ENCODE measurements at regions of chr6 and their contacts with region 1.

Region 1: DNA sequence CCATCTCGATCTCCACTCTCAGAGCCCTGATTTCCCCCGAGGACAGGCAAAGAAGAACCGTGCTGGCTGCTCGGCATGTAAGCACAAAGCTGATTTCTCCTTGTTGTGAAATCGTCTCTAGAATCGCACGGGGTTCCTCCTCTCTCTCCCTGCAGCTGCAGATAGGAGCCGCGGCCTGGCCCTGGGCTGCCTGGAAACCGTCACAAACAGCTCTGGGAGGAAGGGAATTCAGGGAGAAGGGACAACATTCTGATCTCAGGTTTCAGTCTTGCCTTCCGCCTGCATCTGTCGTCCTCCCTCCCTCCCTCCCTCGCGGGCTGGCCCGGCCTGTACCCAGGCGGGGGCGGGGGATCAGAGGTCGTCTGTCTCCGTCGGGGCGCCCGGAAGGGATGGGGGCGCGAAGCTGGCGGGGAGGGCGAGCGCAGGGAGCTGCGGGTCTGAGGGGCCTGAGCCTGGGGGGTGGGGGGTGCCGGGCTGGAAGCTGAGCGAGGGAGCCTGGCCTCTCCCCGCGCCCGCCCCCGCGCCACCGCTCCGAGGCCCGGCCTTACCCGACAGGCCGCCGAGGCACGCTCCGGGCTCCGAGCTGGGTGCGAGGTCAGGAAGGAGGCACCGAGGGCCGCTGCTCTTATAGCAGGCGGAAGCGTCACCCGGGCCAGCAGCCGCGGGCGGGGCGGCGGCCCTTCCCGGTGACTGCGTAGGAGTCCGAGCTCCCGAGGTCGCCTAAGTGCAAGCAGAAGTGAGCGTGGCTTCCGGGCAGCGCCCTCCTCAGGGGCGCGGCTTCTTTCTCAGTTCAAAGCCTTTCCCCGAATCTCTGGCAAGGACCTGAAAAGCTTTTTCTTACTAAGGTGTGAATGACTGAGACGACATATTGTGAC is at the start of gene SERPINB1:
- DNase-seq: peak; percentile 92 to 98 (median 94)
- ATAC-seq: peak; percentile 93
- H3K4me3 ChIP-seq: peak within 1 kb of the TSS; percentile 52
- H3K27ac ChIP-seq: peak within 1 kb of the TSS; percentile 84
- H3K4me1 ChIP-seq: peaks cover 27 to 32% of the 10 kb centered on the region in 2 experiments
- H3K27me3 ChIP-seq: no peaks in the 10 kb centered on the region
- CTCF ChIP-seq: peak; percentile 30 to 39 (median 33); a peak in 5 of 6 replicates
- EP300 ChIP-seq: peak; percentile 81
- POLR2A ChIP-seq: peak; percentile 91
- RAD21 ChIP-seq: peak; percentile 15 to 19; a peak in 1 of 4 replicates
- polyA plus RNA-seq, gene SERPINB1: 63.8 to 68.7 TPM

Region 2: GRCh38 chr6:2658788-2659187 is 182.7 kb before region 1 on chr6:
- CTCF ChIA-PET with region 1: no interaction called
- POLR2A ChIA-PET with region 1: no interaction called
- in situ Hi-C with region 1: no loop called
- intact Hi-C with region 1: no loop called
- DNase-seq: no peak
- ATAC-seq: no peak; the same call in 1 of the 3 replicates
- H3K4me3 ChIP-seq: no peak overlapping the region
- H3K27ac ChIP-seq: no peak overlapping the region
- H3K4me1 ChIP-seq: no peaks in the 10 kb centered on the region
- H3K27me3 ChIP-seq: peaks cover 13 to 23% of the 10 kb centered on the region in 2 experiments; a peak in 4 of 5 replicates
- CTCF ChIP-seq: no peak
- EP300 ChIP-seq: no peak
- POLR2A ChIP-seq: no peak
- RAD21 ChIP-seq: no peak

Region 3: DNA sequence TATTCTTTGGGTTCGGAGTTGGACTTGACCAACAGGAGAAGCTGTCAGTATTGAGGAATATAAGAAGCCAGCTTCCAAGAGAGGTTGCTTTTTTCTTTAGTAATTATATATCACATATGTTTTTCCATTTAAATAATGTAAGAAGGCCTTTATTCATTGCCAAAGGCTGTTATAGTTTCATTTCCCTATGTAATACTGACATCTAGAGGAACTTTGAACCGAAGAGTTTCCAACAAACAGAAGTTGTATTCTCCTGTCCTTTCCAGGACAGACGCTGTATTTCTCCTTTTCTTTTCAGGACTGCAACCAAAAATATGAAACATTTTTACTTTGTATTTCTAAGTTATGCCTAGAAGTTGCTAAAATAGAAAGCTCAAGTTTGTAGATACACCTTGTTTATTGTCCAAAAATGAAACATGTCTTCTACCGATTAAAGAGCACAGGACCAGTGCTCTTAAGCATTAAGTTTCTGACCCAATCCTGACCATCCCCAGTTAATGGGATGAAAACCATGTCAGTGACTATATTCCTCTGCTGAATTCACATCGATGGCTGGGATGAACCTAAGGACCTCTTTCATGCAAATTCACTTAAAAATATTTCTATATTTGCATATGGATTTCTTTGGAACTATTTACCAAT is 145.9 kb before region 1 on chr6:
- CTCF ChIA-PET with region 1: no interaction called
- POLR2A ChIA-PET with region 1: no interaction called
- in situ Hi-C with region 1: no loop called
- intact Hi-C with region 1: no loop called
- DNase-seq: peak in 1 of 4 experiments; percentile 30
- ATAC-seq: peak; percentile 72; the same call in 2 of the 3 replicates
- H3K4me3 ChIP-seq: no peak overlapping the region
- H3K27ac ChIP-seq: no peak overlapping the region
- H3K4me1 ChIP-seq: no peaks in the 10 kb centered on the region
- H3K27me3 ChIP-seq: peaks cover 51 to 59% of the 10 kb centered on the region in 2 experiments
- CTCF ChIP-seq: peak; percentile 17 to 62 (median 48); a peak in 4 of 6 replicates
- EP300 ChIP-seq: no peak
- POLR2A ChIP-seq: no peak
- RAD21 ChIP-seq: peak; percentile 83 to 84

Region 4: DNA sequence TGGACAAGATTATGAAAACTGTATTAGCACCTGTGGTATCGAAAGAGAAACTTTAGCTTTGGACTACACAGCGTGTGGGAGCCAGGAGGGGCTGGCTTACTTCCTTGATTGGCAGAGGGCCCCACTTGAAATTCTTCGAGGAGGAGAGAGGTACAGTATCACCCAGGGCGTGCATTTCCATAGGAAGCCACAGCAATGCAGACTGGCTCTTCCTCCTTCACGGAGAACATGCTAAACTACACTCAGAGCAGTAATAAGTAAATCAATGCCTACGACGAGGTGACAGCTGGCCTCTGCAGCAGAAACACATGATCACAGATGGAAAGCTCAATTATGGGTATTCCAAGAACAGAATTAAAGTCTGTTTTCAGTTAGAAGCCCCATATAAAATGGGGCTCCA is 134.9 kb before region 1 on chr6:
- CTCF ChIA-PET with region 1: no interaction called
- POLR2A ChIA-PET with region 1: no interaction called
- in situ Hi-C with region 1: no loop called
- intact Hi-C with region 1: no loop called
- DNase-seq: no peak
- ATAC-seq: no peak
- H3K4me3 ChIP-seq: no peak overlapping the region
- H3K27ac ChIP-seq: no peak overlapping the region
- H3K4me1 ChIP-seq: no peaks in the 10 kb centered on the region
- H3K27me3 ChIP-seq: peaks cover 23 to 38% of the 10 kb centered on the region in 2 experiments
- CTCF ChIP-seq: no peak
- EP300 ChIP-seq: no peak
- POLR2A ChIP-seq: no peak
- RAD21 ChIP-seq: no peak

Region 5: GRCh38 chr6:2765166-2765895 is 76.2 kb before region 1 on chr6 and contains the start of gene WRNIP1:
- CTCF ChIA-PET with region 1: no interaction called
- POLR2A ChIA-PET with region 1: interaction called, 6 read pairs
- in situ Hi-C with region 1: no loop called
- intact Hi-C with region 1: loop called (anchors 1 kb)
- DNase-seq: peak; percentile 83 to 100 (median 92)
- ATAC-seq: peak; percentile 93
- H3K4me3 ChIP-seq: peak within 1 kb of the TSS; percentile 78
- H3K27ac ChIP-seq: peak within 1 kb of the TSS; percentile 85
- H3K4me1 ChIP-seq: peaks cover 37 to 39% of the 10 kb centered on the region in 2 experiments
- H3K27me3 ChIP-seq: no peaks in the 10 kb centered on the region
- CTCF ChIP-seq: peak; percentile 74 to 95 (median 78)
- EP300 ChIP-seq: no peak
- POLR2A ChIP-seq: no peak
- RAD21 ChIP-seq: peak in 1 of 2 experiments; percentile 17; a peak in 2 of 4 replicates
- polyA plus RNA-seq, gene WRNIP1: 13.2 to 15.9 TPM

Region 6: DNA sequence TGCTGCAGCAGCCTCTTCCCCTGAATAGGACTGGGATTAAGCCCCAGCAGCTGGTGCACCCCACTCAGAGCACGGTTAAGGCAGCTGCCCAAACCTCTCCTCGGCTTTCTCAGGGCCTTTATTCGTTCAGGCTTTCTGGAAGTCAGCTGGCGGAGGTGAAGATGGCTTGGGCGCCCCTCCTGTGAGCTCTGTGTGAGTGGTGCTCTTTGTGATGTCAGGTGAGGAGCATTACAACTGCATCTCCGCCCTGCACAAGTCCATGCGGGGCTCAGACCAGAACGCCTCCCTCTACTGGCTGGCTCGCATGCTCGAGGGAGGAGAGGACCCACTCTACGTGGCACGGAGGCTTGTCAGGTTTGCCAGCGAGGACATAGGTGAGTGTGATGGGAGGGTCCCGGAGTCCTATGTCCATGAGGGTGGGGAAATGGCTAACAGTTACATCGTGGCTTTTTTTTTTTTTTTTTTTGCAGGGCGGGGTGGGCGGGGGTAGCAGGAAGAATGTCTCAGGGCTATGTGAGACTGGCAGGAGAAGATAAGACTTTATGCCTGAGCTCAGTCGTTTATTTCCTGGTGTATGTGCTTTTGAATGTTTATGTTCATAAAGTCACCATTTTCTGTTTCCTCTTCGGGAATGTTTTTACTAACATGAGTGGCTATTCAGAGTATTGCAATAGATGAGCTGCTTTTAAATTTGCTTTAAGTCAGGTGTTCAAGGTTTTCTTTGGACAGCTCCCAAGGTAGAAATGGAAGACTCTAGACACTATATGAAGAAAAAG is 58.1 kb before region 1 on chr6:
- CTCF ChIA-PET with region 1: no interaction called
- POLR2A ChIA-PET with region 1: interaction called, 9 read pairs
- in situ Hi-C with region 1: loop called (anchors 5 kb)
- intact Hi-C with region 1: no loop called
- DNase-seq: peak; percentile 63 to 82 (median 74)
- ATAC-seq: peak; percentile 92
- H3K4me3 ChIP-seq: peak overlapping the region; percentile 21; the same call in 1 of the 2 replicates
- H3K27ac ChIP-seq: peak overlapping the region; percentile 61
- H3K4me1 ChIP-seq: peaks cover 19 to 20% of the 10 kb centered on the region in 2 experiments
- H3K27me3 ChIP-seq: no peaks in the 10 kb centered on the region
- CTCF ChIP-seq: peak; percentile 39 to 64 (median 49)
- EP300 ChIP-seq: peak; percentile 36; the same call in 1 of the 2 replicates
- POLR2A ChIP-seq: no peak; the same call in 1 of the 2 replicates
- RAD21 ChIP-seq: 0 out of 4 replicates have a peak, but pooled peaks of 1 of the 2 experiments have one; percentile 32

Region 7: GRCh38 chr6:2791124-2791974 is 50.2 kb before region 1 on chr6:
- CTCF ChIA-PET with region 1: interaction called, 8 read pairs
- POLR2A ChIA-PET with region 1: interaction called, 8 read pairs
- in situ Hi-C with region 1: loop called (anchors 5 kb)
- intact Hi-C with region 1: loop called (anchors 1 kb)
- DNase-seq: peak; percentile 74 to 88 (median 81)
- ATAC-seq: peak; percentile 97
- H3K4me3 ChIP-seq: no peak overlapping the region
- H3K27ac ChIP-seq: no peak overlapping the region
- H3K4me1 ChIP-seq: peaks cover 2 to 3% of the 10 kb centered on the region in 2 experiments; a peak in 3 of 5 replicates
- H3K27me3 ChIP-seq: no peaks in the 10 kb centered on the region
- CTCF ChIP-seq: peak; percentile 89 to 98 (median 97)
- EP300 ChIP-seq: no peak
- POLR2A ChIP-seq: no peak
- RAD21 ChIP-seq: peak; percentile 97 to 99

Region 8: GRCh38 chr6:2818593-2818992 is 22.9 kb before region 1 on chr6:
- CTCF ChIA-PET with region 1: no interaction called
- POLR2A ChIA-PET with region 1: interaction called, 18 read pairs
- in situ Hi-C with region 1: no loop called
- intact Hi-C with region 1: no loop called
- DNase-seq: no peak
- ATAC-seq: no peak
- H3K4me3 ChIP-seq: no peak overlapping the region
- H3K27ac ChIP-seq: no peak overlapping the region
- H3K4me1 ChIP-seq: no peaks in the 10 kb centered on the region
- H3K27me3 ChIP-seq: no peaks in the 10 kb centered on the region
- CTCF ChIP-seq: no peak
- EP300 ChIP-seq: no peak
- POLR2A ChIP-seq: no peak
- RAD21 ChIP-seq: no peak

Region 9: GRCh38 chr6:2831392-2831791 is 10.1 kb before region 1 on chr6:
- CTCF ChIA-PET with region 1: no interaction called
- POLR2A ChIA-PET with region 1: interaction called, 52 read pairs
- in situ Hi-C with region 1: no loop called
- intact Hi-C with region 1: no loop called
- DNase-seq: no peak
- ATAC-seq: peak; percentile 66
- H3K4me3 ChIP-seq: no peak overlapping the region
- H3K27ac ChIP-seq: no peak overlapping the region
- H3K4me1 ChIP-seq: no peaks in the 10 kb centered on the region
- H3K27me3 ChIP-seq: no peaks in the 10 kb centered on the region
- CTCF ChIP-seq: no peak
- EP300 ChIP-seq: no peak
- POLR2A ChIP-seq: no peak
- RAD21 ChIP-seq: no peak

Region 10: GRCh38 chr6:2857580-2858337 is 16.3 kb after region 1 on chr6:
- CTCF ChIA-PET with region 1: no interaction called
- POLR2A ChIA-PET with region 1: interaction called, 23 read pairs
- in situ Hi-C with region 1: no loop called
- intact Hi-C with region 1: no loop called
- DNase-seq: peak; percentile 79 to 96 (median 86)
- ATAC-seq: peak; percentile 86
- H3K4me3 ChIP-seq: peak overlapping the region; percentile 22
- H3K27ac ChIP-seq: peak overlapping the region; percentile 98
- H3K4me1 ChIP-seq: peaks cover 48 to 67% of the 10 kb centered on the region in 2 experiments
- H3K27me3 ChIP-seq: no peaks in the 10 kb centered on the region
- CTCF ChIP-seq: 0 out of 6 replicates have a peak, but pooled peaks of 1 of the 3 experiments have one; percentile 8
- EP300 ChIP-seq: peak; percentile 87
- POLR2A ChIP-seq: peak; percentile 78
- RAD21 ChIP-seq: no peak; a peak in 1 of 4 replicates

Measured in K562 (cell line).